Heart left ventricle (tissue), 16 donors: ENCODE measurements at regions of chr1 and their contacts with region 1.

Region 1: DNA sequence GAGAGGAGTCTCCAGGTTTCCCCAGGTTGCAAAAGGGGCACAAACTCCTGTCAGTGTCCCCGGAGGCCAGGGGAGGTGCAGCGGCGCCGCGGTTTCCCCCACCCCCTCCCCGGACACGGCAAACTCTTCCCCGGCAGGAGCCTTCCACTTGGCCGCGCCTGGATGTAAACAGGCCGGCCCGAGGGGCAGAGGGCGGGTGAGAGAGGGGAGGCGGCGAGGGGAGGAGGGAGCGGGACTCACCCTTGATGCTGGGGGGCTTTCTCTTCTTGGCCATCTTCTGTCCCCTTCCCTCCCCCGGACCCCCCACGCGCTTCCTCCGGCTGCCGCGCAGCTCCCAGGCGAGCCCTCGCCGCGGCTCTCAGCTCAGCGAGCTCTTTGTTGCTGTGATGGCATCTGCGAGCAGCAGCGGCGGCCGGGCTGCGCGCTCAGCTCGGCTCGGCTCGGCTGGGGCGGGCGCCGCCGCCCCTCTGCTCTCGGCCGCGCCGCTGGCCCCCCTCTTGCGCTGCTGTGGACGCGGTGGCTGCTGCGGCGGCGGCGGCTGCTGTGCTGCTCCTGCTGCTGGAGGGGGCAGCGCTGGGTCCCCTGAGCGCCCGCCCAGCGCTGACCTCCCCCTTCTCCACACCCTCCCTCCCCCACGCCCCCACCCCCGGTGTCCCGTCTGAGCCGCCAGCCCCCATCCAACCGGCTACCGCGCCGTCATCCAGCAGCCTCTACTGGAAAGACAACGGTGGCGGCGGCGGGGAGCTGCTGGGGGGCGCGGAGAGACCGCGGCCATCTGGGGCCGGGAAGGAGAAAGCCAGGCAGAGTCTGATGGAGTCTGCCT is 4.9 kb upstream of the SLC44A5 start:
- DNase-seq: peak in 3 of 5 donors; percentile 7 to 61 (median 28)
- ATAC-seq: peak; percentile 28 to 83 (median 67)
- H3K4me3 ChIP-seq: peak overlapping the region; percentile 20 to 60 (median 56)
- H3K27ac ChIP-seq: peak overlapping the region in 1 of 12 donors; percentile 13
- H3K4me1 ChIP-seq: peaks cover 0 to 28% (median 12%) of the 10 kb centered on the region in 12 donors
- H3K27me3 ChIP-seq: peaks cover 0 to 52% (median 19%) of the 10 kb centered on the region in 9 donors
- CTCF ChIP-seq: no peak
- POLR2A ChIP-seq: no peak

Region 2: DNA sequence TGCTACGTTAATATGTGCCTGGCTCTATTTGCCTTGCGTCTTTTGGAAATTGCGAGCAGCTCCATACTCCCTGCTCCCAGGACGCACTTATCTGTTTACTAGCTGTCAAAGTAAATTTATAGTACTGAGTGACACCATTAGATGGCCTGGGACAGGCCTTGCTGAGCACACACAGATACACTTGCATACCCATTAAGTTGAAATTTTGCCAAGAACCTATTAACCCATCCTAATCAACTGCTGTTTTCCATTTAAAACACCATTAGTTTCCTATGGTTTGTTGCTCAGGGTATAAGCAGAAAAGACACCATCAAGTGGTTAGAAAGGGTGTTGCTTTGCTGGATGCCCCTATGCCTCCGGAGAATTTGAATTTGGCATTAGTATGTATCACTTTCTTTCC is 192.2 kb before region 1 on chr1:
- intact Hi-C with region 1: loop called in 1 of 10 experiments (anchors 10 kb)
- DNase-seq: peak in 1 of 5 donors; percentile 29
- ATAC-seq: peak in 3 of 4 donors; percentile 36 to 93 (median 85)
- H3K4me3 ChIP-seq: no peak overlapping the region
- H3K27ac ChIP-seq: peak overlapping the region in 2 of 12 donors; percentile 8 to 60
- H3K4me1 ChIP-seq: no peaks in the 10 kb centered on the region
- H3K27me3 ChIP-seq: no peaks in the 10 kb centered on the region
- CTCF ChIP-seq: no peak
- POLR2A ChIP-seq: no peak

Region 3: DNA sequence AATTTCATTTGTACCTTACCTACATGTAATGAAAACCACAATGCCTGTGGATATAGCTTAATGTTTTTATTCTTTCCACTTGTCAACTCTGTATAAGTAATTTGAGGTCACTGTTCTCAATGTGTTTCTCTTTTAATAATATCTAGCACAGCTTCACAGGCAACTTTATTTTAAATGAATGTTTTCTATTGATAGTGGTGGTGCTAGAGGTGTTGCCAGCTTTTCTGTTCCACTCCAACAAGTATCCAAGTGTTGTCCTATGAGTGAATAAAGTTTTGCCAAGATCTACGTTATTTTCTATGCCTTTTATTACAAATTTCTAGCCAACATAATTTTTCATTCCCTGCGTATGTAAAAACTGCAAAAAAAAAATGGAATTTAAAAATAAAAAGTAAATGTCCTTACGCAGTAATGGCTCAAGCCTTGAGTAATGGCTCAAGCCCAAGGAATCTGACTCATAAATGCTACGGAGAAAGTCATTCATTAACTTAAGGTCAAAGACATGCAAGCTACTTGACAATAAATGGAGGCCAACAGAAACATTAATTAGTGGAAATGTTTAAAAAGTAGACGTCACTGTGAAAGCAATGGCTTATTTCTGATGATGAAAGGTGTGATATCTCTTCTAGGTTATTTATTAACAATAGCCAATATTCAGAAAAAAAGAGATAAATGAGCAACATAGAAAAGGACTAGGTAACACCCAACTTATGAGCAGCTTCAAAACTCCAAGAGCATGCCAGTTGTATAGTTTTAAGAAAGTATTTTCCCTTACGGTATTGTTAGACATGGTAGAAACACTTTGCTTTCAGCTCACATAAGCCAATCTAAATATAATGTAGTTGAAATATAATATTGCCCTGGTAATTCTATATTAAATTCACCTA is 76.4 kb before region 1 on chr1:
- intact Hi-C with region 1: no loop called
- DNase-seq: no peak
- ATAC-seq: peak in 1 of 4 donors; percentile 63
- H3K4me3 ChIP-seq: no peak overlapping the region
- H3K27ac ChIP-seq: no peak overlapping the region
- H3K4me1 ChIP-seq: no peaks in the 10 kb centered on the region
- H3K27me3 ChIP-seq: no peaks in the 10 kb centered on the region
- CTCF ChIP-seq: no peak
- POLR2A ChIP-seq: no peak

Region 4: DNA sequence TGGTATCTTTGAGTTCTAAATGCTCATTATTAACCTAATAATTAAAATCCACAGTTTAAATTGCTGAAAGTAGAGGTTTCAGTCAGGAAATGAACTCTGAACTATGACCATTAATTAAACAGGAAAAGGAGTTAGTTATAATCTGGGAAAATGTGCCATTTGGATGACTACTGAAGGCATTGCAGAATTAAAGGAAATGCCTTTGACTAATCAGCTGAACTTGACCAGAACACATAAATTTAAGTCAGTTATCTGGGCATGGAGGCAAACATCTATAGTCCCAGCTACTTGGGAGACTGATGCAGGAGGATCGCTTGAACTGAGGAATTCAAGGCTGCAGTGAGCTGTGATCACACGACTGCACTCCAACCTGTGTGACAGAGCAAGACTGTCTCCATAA is 36.8 kb before region 1 on chr1:
- intact Hi-C with region 1: no loop called
- DNase-seq: no peak
- ATAC-seq: no peak
- H3K4me3 ChIP-seq: no peak overlapping the region
- H3K27ac ChIP-seq: no peak overlapping the region
- H3K4me1 ChIP-seq: no peaks in the 10 kb centered on the region
- H3K27me3 ChIP-seq: no peaks in the 10 kb centered on the region
- CTCF ChIP-seq: no peak
- POLR2A ChIP-seq: no peak

Region 5: DNA sequence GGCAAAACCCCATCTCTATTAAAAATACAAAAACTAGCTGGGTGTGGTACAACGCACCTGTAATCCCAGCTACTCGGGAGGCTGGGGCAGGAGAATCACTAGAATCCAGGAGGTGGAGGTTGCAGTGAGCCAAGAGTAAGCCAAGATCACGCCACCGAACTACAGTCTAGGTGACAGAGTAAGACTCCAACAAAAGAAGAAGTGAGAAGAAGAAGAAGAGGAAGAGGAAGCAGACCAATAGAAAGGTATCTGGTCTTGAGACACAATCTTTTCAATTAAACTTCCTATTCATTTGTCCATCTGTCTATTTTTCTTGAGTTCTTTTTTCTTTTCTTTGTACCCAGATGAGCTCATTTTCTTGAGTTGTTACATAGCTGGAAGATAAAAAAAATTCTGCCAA is 53.0 kb after region 1 on chr1:
- intact Hi-C with region 1: no loop called
- DNase-seq: no peak
- ATAC-seq: no peak
- H3K4me3 ChIP-seq: no peak overlapping the region
- H3K27ac ChIP-seq: no peak overlapping the region
- H3K4me1 ChIP-seq: no peaks in the 10 kb centered on the region
- H3K27me3 ChIP-seq: no peaks in the 10 kb centered on the region
- CTCF ChIP-seq: no peak
- POLR2A ChIP-seq: no peak